HepG2 (cell line): ENCODE measurements at regions of chr7 and their contacts with region 1.

Region 1: DNA sequence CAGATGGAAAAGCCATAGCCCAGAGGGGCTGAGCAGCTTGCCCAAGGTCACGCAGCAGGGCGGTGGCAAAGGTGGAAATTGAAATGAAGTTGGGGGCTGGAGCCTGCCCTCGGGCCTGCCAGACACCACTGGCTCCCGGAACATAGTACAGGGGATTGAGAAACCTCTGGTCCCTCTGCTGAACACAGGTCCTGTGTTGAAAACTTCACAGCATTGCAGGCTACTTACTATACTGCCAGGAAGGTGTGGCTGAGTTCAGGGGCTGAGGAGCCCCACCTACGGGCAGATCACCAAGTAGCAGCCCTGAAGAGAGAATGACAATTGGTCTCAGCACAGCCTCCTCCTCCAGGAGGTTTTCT is 326.7 kb downstream of the PLXNA4 start:
- DNase-seq: peak; percentile 64
- ATAC-seq: peak; percentile 73
- H3K4me3 ChIP-seq: no peak overlapping the region; a peak in 1 of 6 replicates
- H3K27ac ChIP-seq: no peak overlapping the region
- H3K4me1 ChIP-seq: peaks cover 44% of the 10 kb centered on the region
- H3K27me3 ChIP-seq: no peaks in the 10 kb centered on the region; a peak in 1 of 5 replicates
- CTCF ChIP-seq: peak; percentile 61
- EP300 ChIP-seq: no peak
- POLR2A ChIP-seq: no peak
- RAD21 ChIP-seq: no peak

Region 2: DNA sequence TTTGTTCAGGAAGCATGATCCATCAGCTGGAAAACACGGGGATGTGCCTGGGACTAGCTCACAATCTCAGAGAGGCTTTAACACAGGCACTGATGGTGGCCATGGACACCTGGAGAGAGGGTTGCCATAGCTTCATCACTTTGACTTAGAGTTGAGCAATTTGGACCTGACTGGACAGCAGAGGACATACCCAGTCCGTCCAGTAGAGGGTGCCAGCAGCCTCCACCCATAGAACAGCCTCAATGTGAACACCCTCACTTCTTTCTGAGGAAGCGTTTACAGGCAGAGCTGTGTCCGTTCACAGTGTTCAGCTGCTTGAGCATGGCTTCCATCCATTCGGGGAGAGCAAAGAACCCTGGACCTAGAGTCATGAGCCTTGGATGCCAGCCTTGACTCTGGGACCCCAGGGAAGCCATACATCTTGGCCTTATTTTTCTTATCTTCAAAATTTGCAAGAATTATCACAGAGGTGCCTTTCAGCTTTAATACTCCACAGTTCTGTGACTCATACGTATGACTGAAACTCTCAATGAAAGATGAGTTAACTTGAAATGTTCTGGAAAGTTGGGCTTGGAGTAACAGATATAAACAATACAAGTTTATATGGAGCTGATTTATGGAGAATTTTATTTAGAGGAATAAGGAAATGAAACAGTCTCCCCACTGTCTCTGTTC is 390.3 kb before region 1 on chr7:
- CTCF ChIA-PET with region 1: no interaction called
- POLR2A ChIA-PET with region 1: no interaction called
- in situ Hi-C with region 1: no loop called
- intact Hi-C with region 1: loop called (anchors 5 kb)
- DNase-seq: peak; percentile 18
- ATAC-seq: peak; percentile 95
- H3K4me3 ChIP-seq: no peak overlapping the region
- H3K27ac ChIP-seq: no peak overlapping the region
- H3K4me1 ChIP-seq: no peaks in the 10 kb centered on the region
- H3K27me3 ChIP-seq: no peaks in the 10 kb centered on the region; a peak in 1 of 5 replicates
- CTCF ChIP-seq: peak; percentile 85
- EP300 ChIP-seq: no peak
- POLR2A ChIP-seq: no peak
- RAD21 ChIP-seq: no peak

Region 3: GRCh38 chr7:131995328-131995727 is 254.3 kb before region 1 on chr7:
- CTCF ChIA-PET with region 1: no interaction called
- POLR2A ChIA-PET with region 1: no interaction called
- in situ Hi-C with region 1: no loop called
- intact Hi-C with region 1: no loop called
- DNase-seq: no peak
- ATAC-seq: no peak
- H3K4me3 ChIP-seq: no peak overlapping the region
- H3K27ac ChIP-seq: no peak overlapping the region
- H3K4me1 ChIP-seq: no peaks in the 10 kb centered on the region
- H3K27me3 ChIP-seq: no peaks in the 10 kb centered on the region; a peak in 1 of 5 replicates
- CTCF ChIP-seq: no peak
- EP300 ChIP-seq: no peak
- POLR2A ChIP-seq: no peak
- RAD21 ChIP-seq: no peak

Region 4: DNA sequence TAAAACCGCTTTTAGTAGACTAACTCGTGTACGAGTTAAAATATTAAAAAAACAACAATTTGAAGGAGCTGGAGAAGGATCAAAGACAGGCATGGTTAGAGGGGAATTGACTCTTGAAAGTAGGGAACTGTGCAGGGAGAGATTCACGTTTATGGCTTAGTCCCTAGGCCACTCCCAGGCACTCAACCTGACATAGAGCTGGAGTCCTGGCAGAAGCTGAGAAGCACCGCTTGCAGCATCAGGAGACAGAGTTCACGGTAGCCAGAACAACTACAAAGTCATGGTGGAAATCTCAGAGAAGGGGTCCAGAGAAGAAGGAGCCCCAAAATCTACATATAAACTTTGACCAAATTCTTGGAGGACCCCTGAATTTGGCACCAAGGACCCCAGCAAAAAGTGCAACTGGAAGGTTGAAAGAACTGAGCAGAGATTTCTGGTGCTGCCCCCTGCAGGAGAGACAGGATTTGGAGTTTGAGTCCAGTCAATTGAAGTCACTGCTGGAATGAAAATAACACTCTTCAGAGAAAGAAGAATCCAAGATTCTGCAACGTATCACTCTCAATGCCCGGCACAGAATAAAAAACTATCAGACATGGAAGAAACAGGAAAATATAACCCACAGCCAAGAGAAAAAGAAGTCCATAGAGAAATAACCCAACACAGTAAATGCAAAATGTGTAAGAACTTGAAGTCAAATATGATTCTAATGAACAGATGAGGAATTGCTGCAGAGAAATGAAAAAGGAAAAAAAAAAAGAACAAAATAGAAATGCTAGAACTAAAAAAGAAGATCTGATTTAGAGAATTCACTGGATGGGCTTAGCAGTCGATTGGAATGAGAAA is 199.9 kb before region 1 on chr7:
- CTCF ChIA-PET with region 1: no interaction called
- POLR2A ChIA-PET with region 1: no interaction called
- in situ Hi-C with region 1: no loop called
- intact Hi-C with region 1: loop called (anchors 5 kb)
- DNase-seq: peak; percentile 18
- ATAC-seq: peak; percentile 48; the same call in 1 of the 3 replicates
- H3K4me3 ChIP-seq: no peak overlapping the region
- H3K27ac ChIP-seq: no peak overlapping the region
- H3K4me1 ChIP-seq: no peaks in the 10 kb centered on the region
- H3K27me3 ChIP-seq: no peaks in the 10 kb centered on the region
- CTCF ChIP-seq: peak; percentile 56; the same call in 1 of the 2 replicates
- EP300 ChIP-seq: no peak
- POLR2A ChIP-seq: no peak
- RAD21 ChIP-seq: no peak

Region 5: DNA sequence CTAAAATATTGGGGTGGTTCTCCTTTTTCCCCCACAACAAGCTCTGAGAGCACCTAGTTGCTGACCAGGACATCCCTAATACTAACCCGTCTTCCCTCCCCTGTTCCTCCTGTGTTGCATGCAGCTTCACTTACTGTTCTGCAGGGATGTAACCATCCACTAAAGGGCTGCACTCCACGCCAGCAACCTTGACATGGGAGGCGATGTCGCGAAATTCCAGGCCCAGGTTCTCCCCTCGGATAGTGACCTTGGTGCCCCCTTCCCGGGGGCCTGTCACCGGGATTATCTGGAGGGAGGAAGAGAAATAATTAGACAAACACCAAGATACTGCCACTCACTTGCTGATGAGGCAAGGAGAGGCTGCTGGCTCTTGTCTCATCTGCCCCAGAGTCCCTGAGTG is 51.2 kb before region 1 on chr7:
- CTCF ChIA-PET with region 1: no interaction called
- POLR2A ChIA-PET with region 1: no interaction called
- in situ Hi-C with region 1: no loop called
- intact Hi-C with region 1: loop called (anchors 1 kb)
- DNase-seq: no peak
- ATAC-seq: no peak
- H3K4me3 ChIP-seq: no peak overlapping the region
- H3K27ac ChIP-seq: no peak overlapping the region
- H3K4me1 ChIP-seq: peaks cover 21% of the 10 kb centered on the region
- H3K27me3 ChIP-seq: peaks cover 5 to 17% of the 10 kb centered on the region in 2 experiments; a peak in 4 of 5 replicates
- CTCF ChIP-seq: no peak
- EP300 ChIP-seq: no peak
- POLR2A ChIP-seq: no peak
- RAD21 ChIP-seq: no peak